MCF 10A (cell line): ENCODE measurements at regions of chr9 and their contacts with region 1.

Region 1: DNA sequence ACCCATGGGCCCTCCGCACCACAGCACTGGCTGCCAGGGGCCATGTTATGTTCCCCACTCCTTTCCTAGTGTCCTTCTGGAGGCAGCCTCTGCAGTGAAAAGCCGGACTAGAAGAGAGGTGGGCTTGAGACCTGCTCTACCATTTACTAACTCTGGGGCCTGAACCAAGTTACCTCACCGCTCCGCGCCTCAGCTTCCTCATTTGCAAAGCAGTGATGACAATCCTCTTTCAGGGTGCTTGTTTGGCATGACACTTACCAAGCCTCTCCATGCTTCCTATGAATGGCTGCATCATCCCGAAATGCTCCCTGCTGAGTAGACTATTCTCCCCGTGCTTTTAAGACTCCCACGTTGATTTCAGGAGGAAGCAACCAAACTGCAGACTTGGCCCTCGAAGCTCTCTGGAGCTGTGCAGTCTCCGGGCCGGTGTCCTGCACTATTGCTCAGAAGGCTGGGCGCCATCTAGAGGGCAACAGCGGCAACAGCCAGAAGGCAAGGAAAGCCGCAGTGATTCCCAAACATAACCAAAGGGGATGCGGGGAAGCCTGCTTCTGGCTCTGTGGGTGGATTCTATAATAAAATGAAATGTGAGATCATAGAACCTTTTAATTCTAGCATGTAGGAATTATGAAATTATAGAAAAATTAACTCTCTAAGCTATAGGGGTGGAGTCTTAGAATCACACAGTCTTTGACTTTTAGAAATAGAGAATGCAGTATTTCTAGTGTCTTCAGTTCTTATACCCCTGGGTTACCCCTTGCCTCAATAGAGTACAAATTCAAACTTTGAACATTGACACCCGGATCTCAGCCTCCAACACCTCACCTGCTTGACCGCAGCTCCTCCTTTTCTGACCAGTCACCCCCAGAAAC is 599.8 kb upstream of the BRINP1 start:
- DNase-seq: peak; percentile 72
- H3K4me3 Mint-ChIP-seq: no peak overlapping the region
- H3K27ac Mint-ChIP-seq: no peak overlapping the region
- H3K4me1 Mint-ChIP-seq: peaks cover 14% of the 10 kb centered on the region
- H3K27me3 Mint-ChIP-seq: no peaks in the 10 kb centered on the region
- CTCF ChIP-seq: peak; percentile 88

Region 2: GRCh38 chr9:118595719-118596305 is 1373.3 kb before region 1 on chr9:
- CTCF ChIA-PET with region 1: interaction called, 4 read pairs
- POLR2A ChIA-PET with region 1: no interaction called
- intact Hi-C with region 1: loop called (anchors 1 kb)
- DNase-seq: peak; percentile 73
- H3K4me3 Mint-ChIP-seq: no peak overlapping the region
- H3K27ac Mint-ChIP-seq: no peak overlapping the region
- H3K4me1 Mint-ChIP-seq: peaks cover 11% of the 10 kb centered on the region
- H3K27me3 Mint-ChIP-seq: no peaks in the 10 kb centered on the region
- CTCF ChIP-seq: peak; percentile 57

Region 3: DNA sequence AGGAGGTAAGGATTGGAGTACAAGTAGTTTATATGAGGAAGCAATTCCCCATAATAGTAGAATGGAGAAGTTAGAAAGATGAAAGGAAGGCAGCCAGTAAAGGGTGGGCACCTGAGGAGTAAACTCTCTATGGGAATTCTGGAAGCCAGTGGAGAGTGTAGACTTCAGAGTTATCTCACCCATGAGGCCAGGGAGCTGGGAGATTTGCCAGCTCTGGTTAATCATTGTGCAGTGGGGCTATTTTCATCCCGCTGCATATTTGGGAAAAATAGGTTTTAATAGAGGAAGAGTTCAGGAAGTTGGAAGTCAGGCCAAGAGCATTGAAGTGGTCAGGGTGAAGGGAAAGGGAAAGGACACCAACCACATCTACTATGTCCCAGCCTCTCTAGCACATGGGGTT is 357.5 kb before region 1 on chr9:
- CTCF ChIA-PET with region 1: no interaction called
- POLR2A ChIA-PET with region 1: no interaction called
- intact Hi-C with region 1: no loop called
- DNase-seq: no peak
- H3K4me3 Mint-ChIP-seq: no peak overlapping the region
- H3K27ac Mint-ChIP-seq: no peak overlapping the region
- H3K4me1 Mint-ChIP-seq: no peaks in the 10 kb centered on the region
- H3K27me3 Mint-ChIP-seq: no peaks in the 10 kb centered on the region
- CTCF ChIP-seq: no peak

Region 4: DNA sequence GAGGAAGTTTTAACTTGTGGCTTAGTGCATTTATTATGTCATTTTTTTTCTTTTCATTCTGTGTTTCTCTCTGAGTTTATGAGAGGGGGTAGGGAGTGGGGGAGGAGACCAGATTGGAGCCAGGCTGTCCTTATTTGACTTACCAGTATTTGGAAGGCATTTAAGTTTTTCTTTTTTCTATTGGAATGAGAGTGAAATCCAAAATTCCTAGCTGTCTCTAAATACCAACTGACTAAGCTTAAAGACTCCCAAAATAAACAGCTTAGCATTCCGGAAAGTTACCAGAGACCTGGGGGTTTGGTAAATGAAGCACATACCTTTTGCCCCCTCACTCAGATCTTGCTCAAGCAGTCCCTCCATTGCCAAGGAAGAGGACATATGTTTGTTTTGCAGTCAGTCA is 18.0 kb before region 1 on chr9:
- CTCF ChIA-PET with region 1: interaction called, 22 read pairs
- POLR2A ChIA-PET with region 1: no interaction called
- intact Hi-C with region 1: no loop called
- DNase-seq: no peak
- H3K4me3 Mint-ChIP-seq: no peak overlapping the region
- H3K27ac Mint-ChIP-seq: no peak overlapping the region
- H3K4me1 Mint-ChIP-seq: no peaks in the 10 kb centered on the region
- H3K27me3 Mint-ChIP-seq: peaks cover 19% of the 10 kb centered on the region
- CTCF ChIP-seq: no peak

Region 5: GRCh38 chr9:119991797-119992196 is 22.7 kb after region 1 on chr9:
- CTCF ChIA-PET with region 1: interaction called, 12 read pairs
- POLR2A ChIA-PET with region 1: no interaction called
- intact Hi-C with region 1: no loop called
- DNase-seq: no peak
- H3K4me3 Mint-ChIP-seq: no peak overlapping the region
- H3K27ac Mint-ChIP-seq: no peak overlapping the region
- H3K4me1 Mint-ChIP-seq: no peaks in the 10 kb centered on the region
- H3K27me3 Mint-ChIP-seq: peaks cover 8% of the 10 kb centered on the region
- CTCF ChIP-seq: no peak

Region 6: GRCh38 chr9:120348951-120349429 is 379.9 kb after region 1 on chr9:
- CTCF ChIA-PET with region 1: interaction called, 9 read pairs
- POLR2A ChIA-PET with region 1: no interaction called
- intact Hi-C with region 1: loop called (anchors 2 kb)
- DNase-seq: peak; percentile 64
- H3K4me3 Mint-ChIP-seq: no peak overlapping the region
- H3K27ac Mint-ChIP-seq: no peak overlapping the region
- H3K4me1 Mint-ChIP-seq: peaks cover 5% of the 10 kb centered on the region
- H3K27me3 Mint-ChIP-seq: no peaks in the 10 kb centered on the region
- CTCF ChIP-seq: peak; percentile 87

Region 7: GRCh38 chr9:120531683-120532300 is 562.7 kb after region 1 on chr9:
- CTCF ChIA-PET with region 1: interaction called, 9 read pairs
- POLR2A ChIA-PET with region 1: no interaction called
- intact Hi-C with region 1: loop called (anchors 2 kb)
- DNase-seq: peak; percentile 81
- H3K4me3 Mint-ChIP-seq: peak overlapping the region; percentile 74
- H3K27ac Mint-ChIP-seq: peak overlapping the region; percentile 89
- H3K4me1 Mint-ChIP-seq: peaks cover 28% of the 10 kb centered on the region
- H3K27me3 Mint-ChIP-seq: no peaks in the 10 kb centered on the region
- CTCF ChIP-seq: peak; percentile 65